Psoas muscle (tissue), 8 donors: ENCODE measurements at regions of chr4 and their contacts with region 1.

Region 1: DNA sequence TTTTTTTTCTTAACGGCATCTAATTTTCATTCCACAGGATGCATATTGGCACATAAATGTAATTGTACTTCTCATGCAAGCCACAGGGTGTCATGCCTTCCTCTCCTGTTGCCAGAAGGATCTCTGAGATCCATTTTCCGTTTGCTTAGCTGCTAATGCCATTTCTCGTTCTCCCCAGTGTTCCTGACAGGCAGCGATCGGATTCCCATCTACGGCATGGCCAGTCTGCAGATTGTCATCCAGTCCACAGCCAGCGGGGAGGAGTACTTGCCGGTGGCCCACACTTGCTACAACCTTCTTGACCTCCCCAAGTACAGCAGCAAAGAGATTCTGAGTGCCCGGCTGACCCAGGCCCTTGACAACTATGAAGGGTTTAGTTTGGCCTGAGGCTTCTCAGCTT is 8.9 kb upstream of the NAP1L5 start:
- DNase-seq: peak; percentile 36 to 72
- ATAC-seq: peak; percentile 92 to 98 (median 96)
- H3K4me3 ChIP-seq: no peak overlapping the region
- H3K27ac ChIP-seq: peak overlapping the region; percentile 68
- H3K4me1 ChIP-seq: peaks cover 4% of the 10 kb centered on the region
- H3K27me3 ChIP-seq: no peaks in the 10 kb centered on the region
- CTCF ChIP-seq: peak; percentile 66

Region 2: DNA sequence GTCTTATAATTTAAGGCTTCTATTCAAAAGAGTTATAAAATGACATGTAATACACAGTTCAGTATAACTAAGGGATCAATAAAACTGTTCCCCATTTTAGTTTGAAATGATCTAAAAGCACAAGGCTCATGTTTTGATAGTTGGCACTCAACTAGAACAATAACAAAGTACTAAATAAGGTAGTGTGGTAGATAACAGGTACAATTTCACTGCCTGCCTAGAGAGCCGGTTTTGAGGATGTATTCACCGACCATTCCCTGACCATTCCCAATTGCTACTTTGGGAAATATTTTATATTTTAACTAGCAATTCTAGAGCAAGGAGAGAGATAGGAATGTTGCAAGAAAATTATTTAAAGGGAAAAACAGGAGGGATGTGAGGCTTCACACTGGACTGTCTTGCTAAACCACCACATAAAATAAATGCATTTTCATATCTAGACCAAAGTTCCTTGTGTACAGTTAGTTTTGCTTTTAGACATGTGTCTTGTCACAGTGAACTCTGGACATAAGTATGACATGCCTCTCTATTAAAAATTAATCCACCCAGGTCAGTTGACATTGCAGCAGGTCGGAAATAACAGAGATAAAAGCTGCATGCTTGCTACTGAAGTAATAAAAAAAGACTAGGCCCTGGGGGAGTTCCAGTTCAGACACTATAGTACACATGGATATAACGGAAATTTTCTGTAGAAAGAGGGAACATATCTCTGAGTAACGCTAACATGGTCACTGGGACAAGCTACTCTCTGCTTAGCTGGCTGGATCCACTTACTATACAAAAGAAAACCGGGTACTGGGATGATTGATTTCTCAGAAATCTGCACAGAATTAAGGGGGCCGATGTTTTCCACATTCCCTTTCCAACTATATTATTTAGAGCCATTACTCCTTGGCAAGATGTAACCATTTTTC is 47.3 kb after region 1 on chr4:
- intact Hi-C with region 1: no loop called
- DNase-seq: no peak
- ATAC-seq: no peak
- H3K4me3 ChIP-seq: no peak overlapping the region
- H3K27ac ChIP-seq: no peak overlapping the region
- H3K4me1 ChIP-seq: peaks cover 16% of the 10 kb centered on the region
- H3K27me3 ChIP-seq: no peaks in the 10 kb centered on the region
- CTCF ChIP-seq: no peak

Region 3: GRCh38 chr4:88779431-88779830 is 72.9 kb after region 1 on chr4:
- intact Hi-C with region 1: loop called in 1 of 2 experiments (anchors 10 kb)
- DNase-seq: no peak
- ATAC-seq: no peak
- H3K4me3 ChIP-seq: no peak overlapping the region
- H3K27ac ChIP-seq: no peak overlapping the region
- H3K4me1 ChIP-seq: no peaks in the 10 kb centered on the region
- H3K27me3 ChIP-seq: no peaks in the 10 kb centered on the region
- CTCF ChIP-seq: no peak

Region 4: GRCh38 chr4:88792268-88792781 is 85.8 kb after region 1 on chr4:
- intact Hi-C with region 1: loop called (anchors 2 to 5 kb)
- DNase-seq: no peak
- ATAC-seq: peak in 3 of 4 donors; percentile 32 to 46 (median 46)
- H3K4me3 ChIP-seq: no peak overlapping the region
- H3K27ac ChIP-seq: peak overlapping the region; percentile 2
- H3K4me1 ChIP-seq: peaks cover 8% of the 10 kb centered on the region
- H3K27me3 ChIP-seq: no peaks in the 10 kb centered on the region
- CTCF ChIP-seq: no peak

Region 5: GRCh38 chr4:89101256-89102161 is 394.9 kb after region 1 on chr4:
- intact Hi-C with region 1: loop called in 1 of 2 experiments (anchors 10 kb)
- DNase-seq: no peak
- ATAC-seq: no peak
- H3K4me3 ChIP-seq: no peak overlapping the region
- H3K27ac ChIP-seq: no peak overlapping the region
- H3K4me1 ChIP-seq: no peaks in the 10 kb centered on the region
- H3K27me3 ChIP-seq: no peaks in the 10 kb centered on the region
- CTCF ChIP-seq: no peak